Endothelial cell of umbilical vein (primary cell): ENCODE measurements at regions of chr12 and their contacts with region 1.

Region 1: GRCh38 chr12:30847259-30847658 is 79.3 kb upstream of the TSPAN11 start:
- DNase-seq: peak; percentile 59
- H3K4me3 ChIP-seq: no peak overlapping the region
- H3K27ac ChIP-seq: no peak overlapping the region
- H3K4me1 ChIP-seq: peaks cover 6% of the 10 kb centered on the region
- H3K27me3 ChIP-seq: peaks cover 3 to 5% of the 10 kb centered on the region in 2 experiments
- CTCF ChIP-seq: peak; percentile 45 to 46
- POLR2A ChIP-seq: no peak

Region 2: DNA sequence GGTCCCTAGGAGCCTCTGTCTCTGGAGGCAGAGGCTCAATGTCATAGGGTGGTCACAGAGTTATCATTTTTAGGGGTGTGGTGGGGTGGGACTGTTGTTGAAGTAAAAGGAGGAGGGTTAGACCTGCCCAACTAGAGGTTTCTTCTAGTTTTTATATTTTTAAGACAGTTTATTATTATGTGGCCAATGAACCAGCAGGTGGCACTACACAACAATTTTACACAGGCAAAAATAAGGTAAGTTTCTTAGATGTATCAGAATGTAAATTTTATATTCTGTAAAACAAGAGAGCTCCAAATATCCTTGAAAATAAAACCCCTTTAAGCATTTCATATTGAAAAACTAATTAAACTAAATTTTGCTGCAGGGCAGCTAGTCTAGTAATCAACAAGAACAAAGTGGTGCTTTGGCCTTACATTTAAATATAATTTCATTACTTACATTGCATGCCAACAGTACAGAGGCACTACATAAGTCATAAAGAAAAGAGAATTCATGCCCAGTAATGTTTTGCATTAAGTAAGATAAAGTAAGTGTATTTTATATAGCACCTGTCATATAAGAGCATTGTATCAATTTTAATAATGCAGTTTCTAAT is 1327.6 kb before region 1 on chr12:
- CTCF ChIA-PET with region 1: interaction called, 27 read pairs
- POLR2A ChIA-PET with region 1: no interaction called
- dilution Hi-C with region 1: no loop called
- intact Hi-C with region 1: loop called (anchors 1 kb)
- DNase-seq: peak; percentile 75
- H3K4me3 ChIP-seq: no peak overlapping the region
- H3K27ac ChIP-seq: no peak overlapping the region
- H3K4me1 ChIP-seq: no peaks in the 10 kb centered on the region
- H3K27me3 ChIP-seq: no peaks in the 10 kb centered on the region
- CTCF ChIP-seq: peak; percentile 21 to 33
- POLR2A ChIP-seq: no peak

Region 3: GRCh38 chr12:30985814-30986452 is 138.7 kb after region 1 on chr12:
- CTCF ChIA-PET with region 1: interaction called, 104 read pairs
- POLR2A ChIA-PET with region 1: no interaction called
- dilution Hi-C with region 1: no loop called
- intact Hi-C with region 1: loop called (anchors 1 kb)
- DNase-seq: peak; percentile 65
- H3K4me3 ChIP-seq: no peak overlapping the region
- H3K27ac ChIP-seq: no peak overlapping the region
- H3K4me1 ChIP-seq: no peaks in the 10 kb centered on the region
- H3K27me3 ChIP-seq: no peaks in the 10 kb centered on the region
- CTCF ChIP-seq: peak; percentile 75 to 95
- POLR2A ChIP-seq: no peak

Region 4: GRCh38 chr12:31117203-31118011 is 270.1 kb after region 1 on chr12:
- CTCF ChIA-PET with region 1: interaction called, 3 read pairs
- POLR2A ChIA-PET with region 1: no interaction called
- dilution Hi-C with region 1: no loop called
- intact Hi-C with region 1: loop called (anchors 1 kb)
- DNase-seq: peak; percentile 49
- H3K4me3 ChIP-seq: peak overlapping the region; percentile 21 to 58 (median 46)
- H3K27ac ChIP-seq: no peak overlapping the region
- H3K4me1 ChIP-seq: peaks cover 4% of the 10 kb centered on the region
- H3K27me3 ChIP-seq: peaks cover 17 to 23% of the 10 kb centered on the region in 2 experiments
- CTCF ChIP-seq: peak; percentile 42 to 82
- POLR2A ChIP-seq: no peak

Region 5: DNA sequence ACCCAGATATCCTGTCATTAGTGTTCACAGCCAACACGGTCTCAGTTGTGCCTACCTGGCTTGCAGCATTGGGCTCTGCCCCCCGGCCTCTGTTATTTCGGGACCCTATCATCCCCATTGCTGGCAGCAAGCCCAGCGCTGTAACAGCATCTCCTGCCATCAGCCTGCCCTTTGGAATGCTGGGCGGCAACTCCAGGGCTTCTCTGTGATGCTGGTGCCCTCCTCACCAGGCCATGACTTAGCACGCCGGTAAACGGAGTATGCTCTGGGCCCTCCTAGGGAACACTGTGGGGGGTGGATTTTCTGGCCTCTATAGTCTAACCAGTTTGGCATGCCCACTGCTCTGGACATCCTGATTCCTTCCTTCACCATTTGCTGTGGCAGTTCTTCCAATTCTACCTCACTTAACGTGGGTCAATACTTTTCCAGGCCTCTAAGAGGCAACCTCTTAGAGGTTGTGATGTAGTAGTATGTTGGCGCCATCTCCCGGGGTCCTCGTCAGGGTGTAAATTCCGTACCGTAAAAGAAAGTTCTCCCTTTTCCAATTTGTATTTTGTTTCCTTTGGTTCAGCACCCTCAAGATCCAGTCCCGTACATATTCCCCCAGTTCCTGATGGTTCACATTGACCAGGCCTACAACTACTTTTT is 398.7 kb after region 1 on chr12:
- CTCF ChIA-PET with region 1: interaction called, 123 read pairs
- POLR2A ChIA-PET with region 1: no interaction called
- dilution Hi-C with region 1: loop called (anchors 25 kb)
- intact Hi-C with region 1: no loop called
- DNase-seq: no peak
- H3K4me3 ChIP-seq: no peak overlapping the region
- H3K27ac ChIP-seq: no peak overlapping the region
- H3K4me1 ChIP-seq: no peaks in the 10 kb centered on the region
- H3K27me3 ChIP-seq: peaks cover 0 to 3% of the 10 kb centered on the region in 2 experiments
- CTCF ChIP-seq: no peak
- POLR2A ChIP-seq: no peak